ENCODE measurements at regions of chr1 and their contacts with region 1.

Region 1: DNA sequence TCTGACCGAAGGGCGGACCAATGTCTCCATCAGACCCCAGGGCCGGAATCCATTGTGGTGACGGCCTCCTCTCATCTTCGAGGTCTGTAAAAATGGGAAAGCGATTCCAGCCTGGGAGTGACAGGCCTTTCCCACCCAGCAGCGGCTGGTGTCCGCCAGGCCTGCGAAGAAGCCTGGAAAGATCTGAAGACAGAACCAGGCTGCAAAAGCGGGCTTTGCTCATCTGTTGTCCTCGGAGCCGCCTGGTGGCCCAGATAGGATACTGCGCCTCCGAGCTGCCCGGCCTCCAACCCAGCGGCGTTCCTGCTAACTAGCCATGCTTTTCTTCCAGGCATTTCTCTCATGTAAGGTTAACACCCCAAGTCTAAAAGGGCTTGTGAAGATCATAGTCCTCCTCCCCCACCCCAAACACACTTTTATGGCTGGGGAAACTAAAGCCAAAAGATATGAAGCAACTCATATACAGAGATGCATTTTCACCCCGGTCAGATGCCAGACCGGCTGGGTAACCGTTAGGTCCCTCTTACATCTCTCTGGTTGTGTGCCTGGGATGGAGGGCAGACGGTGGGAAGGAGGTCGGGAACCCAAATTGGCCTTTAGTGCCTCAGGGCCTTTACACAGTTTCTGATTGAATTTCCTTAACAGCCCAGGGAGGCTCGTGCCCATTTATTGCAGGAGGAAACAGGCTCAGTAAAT is 1.9 kb upstream of the DHRS3 start:
- DNase-seq: peak; percentile 86
- ATAC-seq: peak; percentile 41
- H3K4me3 Mint-ChIP-seq: peak overlapping the region; percentile 99
- H3K27ac Mint-ChIP-seq: peak overlapping the region; percentile 83
- H3K4me1 Mint-ChIP-seq: peaks cover 46% of the 10 kb centered on the region
- H3K27me3 Mint-ChIP-seq: no peaks in the 10 kb centered on the region

Region 2: GRCh38 chr1:12296623-12297022 is 323.3 kb before region 1 on chr1:
- CTCF ChIA-PET with region 1: interaction called, 10 read pairs
- POLR2A ChIA-PET with region 1: interaction called, 3 read pairs
- DNase-seq: no peak
- ATAC-seq: peak; percentile 61
- H3K4me3 Mint-ChIP-seq: peak overlapping the region; percentile 24
- H3K27ac Mint-ChIP-seq: peak overlapping the region; percentile 65
- H3K4me1 Mint-ChIP-seq: peaks cover 25% of the 10 kb centered on the region
- H3K27me3 Mint-ChIP-seq: no peaks in the 10 kb centered on the region

Region 3: GRCh38 chr1:12386130-12386529 is 233.8 kb before region 1 on chr1:
- CTCF ChIA-PET with region 1: interaction called, 8 read pairs
- POLR2A ChIA-PET with region 1: interaction called, 12 read pairs
- DNase-seq: no peak
- ATAC-seq: no peak
- H3K4me3 Mint-ChIP-seq: no peak overlapping the region
- H3K27ac Mint-ChIP-seq: peak overlapping the region; percentile 76
- H3K4me1 Mint-ChIP-seq: peaks cover 39% of the 10 kb centered on the region
- H3K27me3 Mint-ChIP-seq: no peaks in the 10 kb centered on the region

Region 4: DNA sequence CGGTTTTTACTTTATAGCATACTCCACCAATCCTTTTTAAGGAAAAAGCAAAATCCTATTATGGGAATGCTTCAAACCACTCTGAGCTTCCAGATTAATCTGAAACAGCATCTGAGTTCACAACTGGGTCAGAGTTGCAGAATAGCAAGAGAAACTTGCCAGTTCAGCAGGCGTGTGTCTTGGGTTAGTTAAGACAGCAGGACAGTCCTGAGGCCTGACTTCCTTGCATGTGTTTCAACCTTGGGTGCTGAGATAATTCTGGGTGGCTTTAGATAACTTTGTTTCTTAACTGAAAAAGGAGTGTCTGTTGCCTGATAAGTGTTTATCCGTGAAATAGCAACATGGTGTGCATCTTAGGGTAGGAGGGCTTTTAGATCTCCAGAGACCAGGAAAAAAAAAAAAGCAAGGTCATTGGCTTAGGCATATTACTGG is 171.2 kb before region 1 on chr1:
- CTCF ChIA-PET with region 1: interaction called, 5 read pairs
- POLR2A ChIA-PET with region 1: interaction called, 12 read pairs
- DNase-seq: no peak
- ATAC-seq: no peak
- H3K4me3 Mint-ChIP-seq: peak overlapping the region; percentile 73
- H3K27ac Mint-ChIP-seq: peak overlapping the region; percentile 98
- H3K4me1 Mint-ChIP-seq: peaks cover 90% of the 10 kb centered on the region
- H3K27me3 Mint-ChIP-seq: no peaks in the 10 kb centered on the region

Region 5: DNA sequence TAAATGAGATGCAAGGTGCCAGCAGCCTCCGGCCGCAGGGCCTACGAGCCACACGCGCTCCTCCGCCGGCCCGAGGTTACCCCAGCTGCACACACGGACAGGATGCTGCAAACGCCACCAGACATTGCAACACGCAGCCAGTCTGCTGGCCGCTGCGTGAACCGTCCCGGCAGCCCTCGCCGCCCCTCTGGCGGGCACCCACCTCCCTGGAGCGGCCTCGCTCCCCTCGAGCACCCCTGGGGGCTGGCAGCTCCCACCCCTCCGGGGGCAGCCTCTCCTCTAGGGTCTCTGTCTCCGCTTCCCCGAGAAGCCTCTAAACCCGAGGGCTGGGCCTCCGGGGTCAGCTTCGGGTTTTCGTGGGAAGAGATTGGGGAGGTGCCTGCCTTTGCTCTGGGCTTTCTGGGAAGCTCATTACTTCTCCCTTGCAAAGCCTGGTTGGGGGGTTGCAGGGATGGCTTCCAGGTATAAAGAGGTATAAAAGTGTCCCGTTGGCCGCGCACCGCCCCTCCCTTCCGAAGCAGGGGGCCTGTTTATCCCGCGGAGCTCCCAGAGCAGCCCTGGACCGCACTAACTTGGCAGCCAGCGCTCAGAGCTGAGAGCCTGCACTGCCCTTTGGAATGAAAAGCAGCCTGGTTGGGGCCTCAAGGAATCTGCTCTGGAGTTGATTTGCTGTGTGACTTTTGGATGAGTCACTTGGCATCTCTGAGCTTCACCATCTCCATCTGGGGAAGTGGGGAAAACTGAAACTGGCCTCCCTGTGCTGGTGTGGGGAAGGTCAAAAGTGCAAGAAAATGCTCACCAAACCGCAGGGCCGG is 23.7 kb before region 1 on chr1:
- CTCF ChIA-PET with region 1: interaction called, 103 read pairs
- POLR2A ChIA-PET with region 1: interaction called, 8 read pairs
- DNase-seq: peak; percentile 28
- ATAC-seq: peak; percentile 27
- H3K4me3 Mint-ChIP-seq: no peak overlapping the region
- H3K27ac Mint-ChIP-seq: no peak overlapping the region
- H3K4me1 Mint-ChIP-seq: peaks cover 65% of the 10 kb centered on the region
- H3K27me3 Mint-ChIP-seq: no peaks in the 10 kb centered on the region

Region 6: GRCh38 chr1:12640237-12640957 is 20.5 kb after region 1 on chr1:
- CTCF ChIA-PET with region 1: no interaction called
- POLR2A ChIA-PET with region 1: no interaction called
- DNase-seq: no peak
- ATAC-seq: no peak
- H3K4me3 Mint-ChIP-seq: no peak overlapping the region
- H3K27ac Mint-ChIP-seq: no peak overlapping the region
- H3K4me1 Mint-ChIP-seq: no peaks in the 10 kb centered on the region
- H3K27me3 Mint-ChIP-seq: peaks cover 2% of the 10 kb centered on the region

Region 7: DNA sequence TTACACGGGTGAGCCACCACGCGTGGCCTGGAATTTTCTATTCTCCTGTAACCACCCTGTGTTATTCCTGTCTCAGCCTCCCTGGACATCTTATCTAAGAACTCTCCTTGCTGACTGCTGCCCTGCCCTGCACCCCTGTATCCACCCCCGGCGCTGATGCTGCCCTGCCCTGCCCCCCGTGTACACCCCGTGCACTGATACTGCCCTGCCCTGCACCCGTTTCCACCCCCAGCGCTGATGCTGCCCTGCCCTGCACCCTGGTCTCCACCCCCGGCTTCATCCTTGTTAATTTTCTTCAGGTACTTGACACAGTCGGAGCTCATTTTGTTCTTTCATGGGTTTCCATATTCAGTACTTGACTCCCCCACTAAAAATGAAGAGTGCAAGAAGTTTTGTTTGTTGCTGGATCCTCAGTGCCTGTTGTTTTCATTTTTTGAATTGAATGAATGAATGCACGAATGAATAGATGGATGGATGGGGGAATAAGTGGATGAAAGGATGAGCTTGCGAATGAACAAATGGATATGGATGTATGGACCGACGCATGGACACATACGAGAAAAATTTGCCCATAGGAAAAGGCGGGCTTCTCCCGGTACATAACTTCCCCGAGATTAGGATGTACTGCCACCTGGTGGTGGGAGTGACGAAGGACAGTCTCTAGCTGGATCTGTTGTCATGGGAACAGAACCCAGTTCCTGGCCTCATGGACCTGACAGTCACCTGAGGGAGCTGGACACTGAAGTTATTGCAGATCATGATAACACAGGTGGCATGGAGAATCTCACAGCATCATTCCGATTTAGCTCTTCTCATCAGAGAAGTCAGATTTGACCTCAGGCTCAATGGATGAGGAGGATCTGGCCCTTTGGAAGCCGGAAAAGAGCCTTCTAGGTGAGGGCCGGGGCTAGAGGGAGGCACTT is 38.9 kb after region 1 on chr1:
- CTCF ChIA-PET with region 1: interaction called, 43 read pairs
- POLR2A ChIA-PET with region 1: no interaction called
- DNase-seq: peak; percentile 78
- ATAC-seq: peak; percentile 81
- H3K4me3 Mint-ChIP-seq: peak overlapping the region; percentile 47
- H3K27ac Mint-ChIP-seq: peak overlapping the region; percentile 0
- H3K4me1 Mint-ChIP-seq: peaks cover 12% of the 10 kb centered on the region
- H3K27me3 Mint-ChIP-seq: peaks cover 10% of the 10 kb centered on the region

Region 8: GRCh38 chr1:12709091-12709491 is 89.2 kb after region 1 on chr1:
- CTCF ChIA-PET with region 1: no interaction called
- POLR2A ChIA-PET with region 1: no interaction called
- DNase-seq: no peak
- ATAC-seq: no peak
- H3K4me3 Mint-ChIP-seq: no peak overlapping the region
- H3K27ac Mint-ChIP-seq: no peak overlapping the region
- H3K4me1 Mint-ChIP-seq: no peaks in the 10 kb centered on the region
- H3K27me3 Mint-ChIP-seq: peaks cover 29% of the 10 kb centered on the region